Left cardiac atrium (tissue), 4 donors: ENCODE measurements at regions of chr3 and their contacts with region 1.

Region 1: DNA sequence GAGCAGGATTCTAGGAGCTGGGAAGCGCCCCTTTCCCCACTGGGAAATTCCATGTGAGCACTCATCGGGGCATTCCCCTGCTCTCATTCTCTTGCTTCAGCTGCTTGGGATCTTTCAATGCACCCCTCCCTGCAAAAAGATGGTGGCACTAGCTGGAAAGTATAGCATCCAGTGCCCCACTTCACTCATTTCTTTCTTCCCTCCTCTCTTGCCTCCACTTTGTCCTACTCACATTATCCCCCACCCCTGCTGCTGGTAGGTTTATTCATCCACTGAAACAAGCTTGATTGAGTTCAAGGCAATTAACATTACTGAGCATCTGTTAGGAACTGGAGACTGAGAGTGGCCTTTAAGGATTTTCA is 84.8 kb upstream of the LIMD1 start:
- DNase-seq: no peak
- ATAC-seq: no peak

Region 2: GRCh38 chr3:45593708-45594609 is 84.2 kb after region 1 on chr3:
- intact Hi-C with region 1: loop called in 1 of 2 experiments (anchors 5 kb)
- DNase-seq: peak; percentile 77
- ATAC-seq: peak; percentile 90